T-cell (primary cell): ENCODE measurements at regions of chr7 and their contacts with region 1.

Region 1: GRCh38 chr7:75722373-75722772 is 16.4 kb downstream of the HIP1 start:
- DNase-seq: no peak
- ATAC-seq: no peak
- H3K4me3 ChIP-seq: no peak overlapping the region
- H3K4me3 Mint-ChIP-seq: no peak overlapping the region
- H3K27ac ChIP-seq: no peak overlapping the region
- H3K27ac Mint-ChIP-seq: no peak overlapping the region
- H3K4me1 ChIP-seq: peaks cover 0 to 9% of the 10 kb centered on the region in 2 experiments
- H3K4me1 Mint-ChIP-seq: peaks cover 0 to 6% (median under 1%) of the 10 kb centered on the region in 3 donors
- H3K27me3 ChIP-seq: no peaks in the 10 kb centered on the region
- H3K27me3 Mint-ChIP-seq: no peaks in the 10 kb centered on the region

Region 2: GRCh38 chr7:75740846-75741497 is 18.6 kb after region 1 on chr7:
- CTCF ChIA-PET with region 1: interaction called in 1 of 2 experiments, 6 read pairs
- POLR2A ChIA-PET with region 1: interaction called in 1 of 2 experiments, 11 read pairs
- DNase-seq: no peak
- ATAC-seq: no peak
- H3K4me3 ChIP-seq: no peak overlapping the region
- H3K4me3 Mint-ChIP-seq: peak overlapping the region in 1 of 3 donors; percentile 35
- H3K27ac ChIP-seq: no peak overlapping the region
- H3K27ac Mint-ChIP-seq: peak overlapping the region; percentile 13 to 33
- H3K4me1 ChIP-seq: peaks cover 0 to 20% of the 10 kb centered on the region in 2 experiments
- H3K4me1 Mint-ChIP-seq: peaks cover 13 to 27% (median 21%) of the 10 kb centered on the region in 3 donors
- H3K27me3 ChIP-seq: no peaks in the 10 kb centered on the region
- H3K27me3 Mint-ChIP-seq: peaks cover 0 to 3% of the 10 kb centered on the region in 2 donors